Dorsolateral prefrontal cortex (tissue), 120 donors: ENCODE measurements at regions of chr11 and their contacts with region 1.

Region 1: DNA sequence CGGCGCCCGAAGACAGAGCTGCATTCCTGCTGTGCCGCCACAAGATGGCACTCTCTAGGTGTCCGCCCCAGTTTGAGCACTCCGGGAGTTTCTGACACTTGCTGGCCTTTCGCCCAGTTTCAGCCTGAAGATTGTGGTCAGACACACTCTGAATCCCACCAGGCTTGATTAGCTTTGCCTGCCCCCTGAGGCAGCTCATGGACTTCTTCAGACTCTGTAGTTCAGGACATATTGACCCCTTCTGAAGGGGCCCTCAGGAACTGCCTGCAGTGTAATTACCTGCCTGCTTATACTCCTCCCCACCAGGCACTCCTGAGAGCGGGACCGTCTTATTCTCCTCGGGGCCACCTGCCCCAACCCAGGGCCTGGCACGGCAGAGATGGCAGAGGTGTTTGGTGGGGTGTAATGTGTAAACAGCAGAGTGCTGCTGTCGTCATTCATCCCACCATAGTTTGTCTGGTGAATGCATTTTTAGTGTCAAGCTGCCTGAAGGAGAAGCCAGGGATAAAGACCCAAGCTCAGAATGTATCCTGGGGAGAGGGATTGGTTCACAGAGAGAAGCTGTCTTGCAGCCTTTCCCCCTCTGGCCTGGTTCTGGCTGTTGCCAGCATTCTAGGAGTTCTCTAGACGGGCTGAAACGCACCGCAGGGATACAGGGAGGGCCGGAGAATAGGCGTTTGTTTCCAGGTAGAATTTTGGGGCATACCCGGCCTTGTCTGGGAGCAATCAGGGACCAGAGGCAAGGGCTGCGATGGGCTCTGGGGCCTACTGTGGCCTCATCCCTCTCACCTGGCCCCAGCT is 46.4 kb downstream of the EIF3F start:
- DNase-seq: peak in 9 of 10 donors; percentile 47 to 82 (median 72)
- H3K4me3 ChIP-seq: peak overlapping the region in 4 of 59 donors; percentile 16 to 26 (median 19)
- H3K27ac ChIP-seq: peak overlapping the region in 4 of 59 donors; percentile 14 to 51 (median 37)
- H3K27me3 ChIP-seq: no peaks in the 10 kb centered on the region
- CTCF ChIP-seq: peak; percentile 67 to 94 (median 88)

Region 2: DNA sequence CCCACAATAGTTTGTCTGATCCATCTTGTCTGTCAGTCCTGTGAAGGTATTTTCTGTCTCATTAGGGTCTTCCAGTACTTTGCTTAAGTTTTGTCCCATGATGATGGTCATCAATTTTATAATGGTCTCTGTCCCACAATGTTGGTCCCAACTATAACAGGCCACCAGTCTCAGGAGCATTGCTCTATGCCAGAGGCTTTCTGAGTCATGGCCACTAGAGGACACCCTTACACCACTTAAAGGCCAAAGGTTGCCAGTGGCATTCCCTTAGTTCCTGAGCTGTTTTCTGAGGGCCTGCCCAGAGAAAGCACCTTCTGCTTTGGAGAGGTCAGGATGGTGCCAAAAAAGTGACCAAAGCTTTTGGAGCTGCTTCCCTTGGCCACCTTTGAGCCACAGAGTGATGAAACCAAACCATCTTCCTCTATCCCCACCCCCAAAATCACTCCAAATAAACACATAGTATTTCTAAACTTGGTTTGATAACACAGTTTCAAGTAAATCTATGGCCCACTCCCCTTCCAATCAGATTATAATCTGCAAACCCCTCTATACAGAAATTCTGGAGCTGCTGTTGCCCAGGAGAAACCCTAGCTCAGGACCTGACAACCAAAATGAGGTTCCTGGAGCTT is 27.0 kb before region 1 on chr11:
- intact Hi-C with region 1: loop called in 1 of 2 experiments (anchors 1 kb)
- DNase-seq: peak in 8 of 10 donors; percentile 30 to 73 (median 54)
- H3K4me3 ChIP-seq: no peak overlapping the region
- H3K27ac ChIP-seq: no peak overlapping the region
- H3K27me3 ChIP-seq: no peaks in the 10 kb centered on the region
- CTCF ChIP-seq: peak; percentile 30 to 94 (median 79)

Region 3: GRCh38 chr11:8070417-8071115 is 37.1 kb after region 1 on chr11:
- intact Hi-C with region 1: no loop called
- DNase-seq: no peak
- H3K4me3 ChIP-seq: no peak overlapping the region
- H3K27ac ChIP-seq: peak overlapping the region in 4 of 59 donors; percentile 17 to 63 (median 40)
- H3K27me3 ChIP-seq: no peaks in the 10 kb centered on the region
- CTCF ChIP-seq: peak in 38 of 56 donors; percentile 9 to 50 (median 26)

Region 4: GRCh38 chr11:8092587-8093424 is 59.3 kb after region 1 on chr11:
- intact Hi-C with region 1: loop called in 1 of 2 experiments (anchors 2 kb)
- DNase-seq: peak in 5 of 10 donors; percentile 45 to 69 (median 54)
- H3K4me3 ChIP-seq: no peak overlapping the region
- H3K27ac ChIP-seq: peak overlapping the region in 11 of 59 donors; percentile 6 to 56 (median 12)
- H3K27me3 ChIP-seq: no peaks in the 10 kb centered on the region
- CTCF ChIP-seq: peak in 54 of 56 donors; percentile 36 to 73 (median 61)

Region 5: DNA sequence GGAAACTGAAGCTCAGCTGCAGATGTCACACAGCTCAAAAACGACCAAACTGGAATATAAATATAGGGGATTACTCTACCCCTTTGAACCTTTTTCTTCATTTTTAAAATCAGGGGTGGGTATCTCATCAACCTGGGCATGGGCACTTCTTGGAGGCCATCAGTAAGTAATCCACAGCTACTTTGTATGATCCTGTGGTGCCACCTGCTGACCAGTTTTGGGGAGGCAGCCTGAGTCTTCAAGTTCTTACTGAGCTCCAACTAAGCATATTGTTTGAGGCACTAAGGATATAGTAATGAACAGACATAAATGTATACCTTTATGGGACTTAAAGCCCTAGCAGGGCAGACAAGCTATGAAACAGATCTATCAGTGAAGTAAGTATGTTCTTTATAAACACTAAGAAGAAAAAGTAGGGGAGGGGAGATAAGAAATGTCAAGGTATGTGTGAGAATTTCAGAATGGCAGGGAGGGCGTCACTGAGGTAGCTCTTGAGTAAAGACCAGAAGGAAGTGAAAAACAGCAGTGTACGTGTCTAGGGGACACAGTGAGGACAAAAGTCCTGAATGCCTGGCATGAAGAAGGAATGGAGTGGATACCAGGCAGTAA is 65.9 kb after region 1 on chr11:
- intact Hi-C with region 1: loop called in 1 of 2 experiments (anchors 2 kb)
- DNase-seq: peak; percentile 71 to 95 (median 81)
- H3K4me3 ChIP-seq: no peak overlapping the region
- H3K27ac ChIP-seq: peak overlapping the region in 21 of 59 donors; percentile 4 to 76 (median 32)
- H3K27me3 ChIP-seq: no peaks in the 10 kb centered on the region
- CTCF ChIP-seq: peak; percentile 49 to 93 (median 83)